Gastrocnemius medialis (tissue), 4 donors: ENCODE measurements at regions of chr11 and their contacts with region 1.

Region 1: DNA sequence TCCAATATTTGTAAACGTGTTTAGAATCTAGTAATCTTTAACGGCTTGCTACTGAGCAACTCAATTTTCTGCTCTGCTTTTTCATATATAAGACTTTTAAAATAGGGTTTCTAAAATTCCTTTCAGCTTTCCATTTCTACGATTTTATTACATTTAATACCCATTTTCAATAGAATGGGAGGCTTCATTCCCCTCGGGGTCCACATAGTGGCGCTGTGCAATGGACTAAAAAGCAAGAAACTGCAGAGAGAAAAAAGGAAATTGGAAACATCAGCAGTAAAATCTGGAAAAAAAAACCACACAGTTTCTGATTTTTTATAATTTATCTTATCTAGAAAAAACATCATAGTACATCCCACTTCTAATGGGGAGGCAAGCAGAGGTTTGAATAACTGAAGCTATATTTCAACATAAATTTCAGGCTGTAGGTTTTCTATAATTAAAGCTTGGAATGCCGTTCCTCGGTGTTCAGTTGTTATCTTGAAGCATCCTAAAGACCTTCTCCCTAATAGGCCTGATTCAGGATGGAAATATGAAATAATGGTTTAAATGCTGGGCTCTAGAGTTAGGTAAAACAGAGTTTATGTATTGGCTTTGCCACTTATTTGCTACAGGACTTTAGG is 18.7 kb upstream of the JHY start:
- DNase-seq: no peak
- ATAC-seq: no peak
- H3K4me3 ChIP-seq: no peak overlapping the region
- H3K27ac ChIP-seq: no peak overlapping the region
- H3K4me1 ChIP-seq: no peaks in the 10 kb centered on the region
- H3K27me3 ChIP-seq: peaks cover 0 to 3% (median 0%) of the 10 kb centered on the region in 3 donors
- CTCF ChIP-seq: peak; percentile 16 to 59 (median 28)
- POLR2A ChIP-seq: no peak

Region 2: GRCh38 chr11:123020968-123021367 is 157.2 kb after region 1 on chr11:
- in situ Hi-C with region 1: loop called in 1 of 4 experiments (anchors 10 kb)
- intact Hi-C with region 1: loop called (anchors 10 kb)
- DNase-seq: no peak
- ATAC-seq: no peak
- H3K4me3 ChIP-seq: no peak overlapping the region
- H3K27ac ChIP-seq: no peak overlapping the region
- H3K4me1 ChIP-seq: no peaks in the 10 kb centered on the region
- H3K27me3 ChIP-seq: peaks cover 0 to 11% (median 0%) of the 10 kb centered on the region in 3 donors
- CTCF ChIP-seq: no peak
- POLR2A ChIP-seq: no peak

Region 3: DNA sequence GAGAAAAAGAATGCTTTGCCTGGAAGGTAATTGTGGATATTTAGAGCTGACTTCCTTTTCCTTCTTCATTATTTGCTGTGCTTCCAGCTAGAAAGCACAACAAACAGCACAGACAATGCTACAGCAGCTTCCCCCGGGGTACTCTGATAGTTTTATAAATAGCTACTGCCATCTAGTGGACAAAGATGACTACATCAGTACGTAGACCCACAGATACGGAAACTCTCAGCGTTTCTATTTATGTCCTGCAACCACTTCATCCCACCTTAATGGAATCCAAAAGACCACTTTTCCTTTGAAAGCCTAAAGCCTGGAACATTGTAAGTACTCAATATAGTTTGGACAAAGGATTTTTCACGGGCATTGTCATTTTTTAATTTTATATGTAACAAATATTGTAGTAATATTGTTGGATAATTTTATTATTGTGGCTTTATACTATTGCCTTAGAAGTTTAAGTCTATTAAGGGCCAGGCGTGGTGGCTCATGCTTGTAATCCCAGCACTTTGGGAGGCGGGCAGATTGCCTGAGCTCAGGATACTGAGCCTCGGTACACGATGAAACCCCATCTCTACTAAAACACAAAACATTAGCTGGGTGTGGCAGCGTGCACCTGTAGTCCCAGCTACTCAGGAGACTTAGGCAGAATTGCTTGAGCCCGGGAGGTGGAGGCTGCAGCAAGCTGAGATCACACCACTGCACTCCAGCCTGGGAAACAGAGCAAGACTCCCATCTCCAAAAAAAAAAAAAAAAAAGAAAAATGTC is 190.7 kb after region 1 on chr11:
- in situ Hi-C with region 1: no loop called
- intact Hi-C with region 1: loop called (anchors 10 kb)
- DNase-seq: no peak
- ATAC-seq: peak; percentile 86 to 92
- H3K4me3 ChIP-seq: no peak overlapping the region
- H3K27ac ChIP-seq: peak overlapping the region in 3 of 4 donors; percentile 2 to 32 (median 6)
- H3K4me1 ChIP-seq: peaks cover 38 to 46% of the 10 kb centered on the region in 2 donors
- H3K27me3 ChIP-seq: no peaks in the 10 kb centered on the region
- CTCF ChIP-seq: peak; percentile 54 to 72 (median 63)
- POLR2A ChIP-seq: no peak